PC-9 (cell line): ENCODE measurements at regions of chr20 and their contacts with region 1.

Region 1: DNA sequence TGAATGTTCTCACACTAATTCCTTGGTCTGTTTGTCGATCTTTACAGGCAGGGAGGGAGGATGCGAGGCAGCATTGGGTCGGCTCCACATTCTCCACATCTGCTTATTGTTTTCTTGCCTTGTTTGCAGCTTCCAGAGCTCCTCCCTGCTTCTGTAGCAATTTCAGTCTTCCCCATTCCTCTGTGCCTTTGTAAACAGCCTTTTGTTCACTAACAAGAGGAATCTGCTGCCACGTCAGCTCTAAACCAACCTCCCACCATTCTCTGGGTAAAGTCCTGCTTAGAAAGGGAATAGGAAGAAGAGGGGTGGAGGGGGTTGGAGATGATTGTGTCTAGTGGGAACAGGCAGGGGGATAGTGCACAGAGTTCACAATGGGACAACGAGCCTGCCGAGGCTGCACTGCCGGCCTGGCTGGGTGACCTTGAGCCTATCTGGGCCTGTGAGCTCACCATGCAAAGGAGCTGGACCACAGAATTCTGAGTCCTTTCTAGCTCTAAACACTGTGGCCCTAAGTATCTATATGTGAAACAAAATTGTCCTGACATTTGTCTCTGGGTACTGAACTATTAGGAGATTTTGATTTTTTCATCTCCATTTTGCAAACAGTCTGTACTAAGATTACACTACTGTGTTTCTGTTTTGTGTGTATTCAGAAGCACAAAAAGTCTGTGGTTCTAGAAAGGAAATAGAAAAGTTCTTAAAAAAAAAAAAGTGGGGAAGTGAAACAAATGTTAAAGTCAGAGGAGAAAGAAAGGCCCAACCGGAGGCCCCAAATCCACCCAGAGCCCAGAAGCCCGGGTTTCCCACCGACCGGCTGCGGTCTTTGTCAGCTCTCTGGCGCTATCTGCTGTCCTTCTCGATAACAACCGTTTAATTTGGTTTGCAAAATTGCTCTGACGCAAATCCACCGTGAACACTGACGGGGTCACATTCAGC is 1.4 kb upstream of the PRND start:
- DNase-seq: peak; percentile 49 to 67
- H3K4me3 ChIP-seq: no peak overlapping the region; the same call in 1 of the 2 replicates
- H3K27ac ChIP-seq: no peak overlapping the region
- H3K4me1 ChIP-seq: peaks cover 11% of the 10 kb centered on the region
- H3K27me3 ChIP-seq: no peaks in the 10 kb centered on the region
- CTCF ChIP-seq: peak; percentile 84

Region 2: GRCh38 chr20:3781153-3781910 is 939.0 kb before region 1 on chr20 and contains the start of gene SPEF1:
- CTCF ChIA-PET with region 1: no interaction called
- POLR2A ChIA-PET with region 1: no interaction called
- intact Hi-C with region 1: no loop called
- DNase-seq: peak; percentile 85 to 94
- H3K4me3 ChIP-seq: peak within 1 kb of the TSS; percentile 65
- H3K27ac ChIP-seq: no peak within 1 kb of the TSS
- H3K4me1 ChIP-seq: peaks cover 34% of the 10 kb centered on the region
- H3K27me3 ChIP-seq: no peaks in the 10 kb centered on the region
- CTCF ChIP-seq: peak; percentile 75
- total RNA-seq, gene SPEF1: 2.6 and 2.7 TPM in 2 replicates

Region 3: GRCh38 chr20:4607287-4607713 is 113.0 kb before region 1 on chr20:
- CTCF ChIA-PET with region 1: interaction called, 8 read pairs
- POLR2A ChIA-PET with region 1: no interaction called
- intact Hi-C with region 1: loop called (anchors 1 kb)
- DNase-seq: peak; percentile 49 to 57
- H3K4me3 ChIP-seq: no peak overlapping the region
- H3K27ac ChIP-seq: no peak overlapping the region
- H3K4me1 ChIP-seq: peaks cover 7% of the 10 kb centered on the region
- H3K27me3 ChIP-seq: no peaks in the 10 kb centered on the region
- CTCF ChIP-seq: peak; percentile 97

Region 4: GRCh38 chr20:4613718-4614620 is 106.3 kb before region 1 on chr20:
- CTCF ChIA-PET with region 1: interaction called, 14 read pairs
- POLR2A ChIA-PET with region 1: no interaction called
- intact Hi-C with region 1: loop called (anchors 1 kb)
- DNase-seq: peak; percentile 63 to 68
- H3K4me3 ChIP-seq: no peak overlapping the region
- H3K27ac ChIP-seq: no peak overlapping the region
- H3K4me1 ChIP-seq: peaks cover 13% of the 10 kb centered on the region
- H3K27me3 ChIP-seq: no peaks in the 10 kb centered on the region
- CTCF ChIP-seq: peak; percentile 73

Region 5: DNA sequence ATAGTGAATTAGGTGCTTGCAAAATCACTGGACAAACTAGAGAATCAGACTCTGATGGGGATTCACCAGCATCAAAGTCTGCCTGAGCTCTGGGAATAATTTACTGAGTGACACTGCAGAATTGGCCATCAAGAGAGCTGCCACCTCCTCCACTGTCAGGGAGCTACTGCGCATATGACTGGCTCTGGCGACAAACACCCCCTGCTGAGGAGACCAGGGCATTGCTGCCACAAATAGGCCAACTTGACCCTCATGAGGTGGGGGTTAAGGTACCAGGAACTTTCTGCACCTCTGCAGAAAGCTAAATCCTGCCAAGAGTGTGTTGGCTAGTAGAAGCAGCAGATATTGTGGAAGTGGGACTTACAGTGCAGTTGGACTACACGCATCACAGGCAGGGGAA is 494.5 kb after region 1 on chr20:
- CTCF ChIA-PET with region 1: no interaction called
- POLR2A ChIA-PET with region 1: interaction called, 15 read pairs
- intact Hi-C with region 1: no loop called
- DNase-seq: no peak
- H3K4me3 ChIP-seq: no peak overlapping the region
- H3K27ac ChIP-seq: no peak overlapping the region
- H3K4me1 ChIP-seq: no peaks in the 10 kb centered on the region
- H3K27me3 ChIP-seq: no peaks in the 10 kb centered on the region
- CTCF ChIP-seq: no peak